RWPE1 (cell line): ENCODE measurements at regions of chr9 and their contacts with region 1.

Region 1: GRCh38 chr9:111362526-111362925 is 32.5 kb upstream of the OR2K2 start:
- DNase-seq: no peak
- H3K27ac ChIP-seq: no peak overlapping the region
- CTCF ChIP-seq: no peak

Region 2: DNA sequence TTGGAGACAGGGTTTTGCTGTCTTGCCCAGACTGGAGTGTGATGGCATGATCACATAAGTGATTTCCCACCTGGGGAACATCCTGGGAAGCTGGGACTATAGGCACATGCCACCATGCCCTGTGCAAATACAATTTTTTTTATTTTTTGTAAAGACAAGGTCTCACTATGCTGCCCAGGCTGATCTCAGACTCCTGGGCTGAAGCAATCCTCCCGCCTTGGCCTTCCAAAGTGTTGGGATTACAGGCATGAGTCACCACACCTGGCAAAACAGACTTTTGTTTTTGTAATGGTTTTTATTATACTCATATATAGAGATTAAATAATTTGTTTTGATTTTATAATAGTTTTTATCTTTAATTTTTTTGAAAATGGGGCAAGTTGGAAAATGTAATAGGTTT is 283.3 kb after region 1 on chr9:
- CTCF ChIA-PET with region 1: interaction called, 11 read pairs
- POLR2A ChIA-PET with region 1: no interaction called
- DNase-seq: no peak
- H3K27ac ChIP-seq: no peak overlapping the region
- CTCF ChIP-seq: no peak